CD8-positive, alpha-beta T cell (primary cell): ENCODE measurements at regions of chr16 and their contacts with region 1.

Region 1: GRCh38 chr16:4253394-4254150 is 11.7 kb upstream of the SRL start:
- DNase-seq: peak; percentile 98 to 100 (median 99)
- ATAC-seq: peak; percentile 96
- H3K4me3 ChIP-seq: peak overlapping the region; percentile 81 to 92
- H3K4me3 Mint-ChIP-seq: peak overlapping the region; percentile 93
- H3K27ac ChIP-seq: peak overlapping the region; percentile 88 to 89
- H3K27ac Mint-ChIP-seq: peak overlapping the region; percentile 98
- H3K4me1 ChIP-seq: peaks cover 6% of the 10 kb centered on the region
- H3K4me1 Mint-ChIP-seq: peaks cover 7% of the 10 kb centered on the region
- H3K27me3 ChIP-seq: no peaks in the 10 kb centered on the region
- H3K27me3 Mint-ChIP-seq: no peaks in the 10 kb centered on the region
- CTCF ChIP-seq: no peak

Region 2: GRCh38 chr16:3611146-3611975 is 642.2 kb before region 1 on chr16 and contains the start of gene SLX4:
- CTCF ChIA-PET with region 1: no interaction called
- POLR2A ChIA-PET with region 1: no interaction called
- intact Hi-C with region 1: loop called (anchors 5 kb)
- DNase-seq: peak; percentile 79 to 98 (median 91)
- ATAC-seq: peak; percentile 87
- H3K4me3 ChIP-seq: peak within 1 kb of the TSS; percentile 80 to 96
- H3K4me3 Mint-ChIP-seq: peak within 1 kb of the TSS; percentile 99
- H3K27ac ChIP-seq: peak within 1 kb of the TSS; percentile 78 to 89
- H3K27ac Mint-ChIP-seq: peak within 1 kb of the TSS; percentile 99
- H3K4me1 ChIP-seq: peaks cover 26% of the 10 kb centered on the region
- H3K4me1 Mint-ChIP-seq: peaks cover 49% of the 10 kb centered on the region
- H3K27me3 ChIP-seq: no peaks in the 10 kb centered on the region
- H3K27me3 Mint-ChIP-seq: no peaks in the 10 kb centered on the region
- CTCF ChIP-seq: no peak
- total RNA-seq, gene SLX4: 5.1 to 5.2 TPM

Region 3: GRCh38 chr16:3938848-3939624 is 314.5 kb before region 1 on chr16:
- CTCF ChIA-PET with region 1: interaction called, 6 read pairs
- POLR2A ChIA-PET with region 1: interaction called, 4 read pairs
- intact Hi-C with region 1: loop called in 1 of 2 experiments (anchors 2 kb)
- DNase-seq: peak; percentile 33 to 83 (median 67)
- ATAC-seq: peak; percentile 91
- H3K4me3 ChIP-seq: peak overlapping the region; percentile 17 to 33
- H3K4me3 Mint-ChIP-seq: no peak overlapping the region
- H3K27ac ChIP-seq: no peak overlapping the region
- H3K27ac Mint-ChIP-seq: no peak overlapping the region
- H3K4me1 ChIP-seq: peaks cover 13% of the 10 kb centered on the region
- H3K4me1 Mint-ChIP-seq: peaks cover 4% of the 10 kb centered on the region
- H3K27me3 ChIP-seq: peaks cover 0 to 5% of the 10 kb centered on the region in 2 experiments
- H3K27me3 Mint-ChIP-seq: peaks cover 3% of the 10 kb centered on the region
- CTCF ChIP-seq: peak; percentile 87

Region 4: GRCh38 chr16:4116337-4117249 is 137.0 kb before region 1 on chr16 and contains the start of gene ADCY9:
- CTCF ChIA-PET with region 1: interaction called, 4 read pairs
- POLR2A ChIA-PET with region 1: no interaction called
- intact Hi-C with region 1: loop called in 1 of 2 experiments (anchors 1 kb)
- DNase-seq: peak; percentile 31 to 92 (median 74)
- ATAC-seq: peak; percentile 77
- H3K4me3 ChIP-seq: peak within 1 kb of the TSS; percentile 55 to 64
- H3K4me3 Mint-ChIP-seq: peak within 1 kb of the TSS; percentile 87
- H3K27ac ChIP-seq: peak within 1 kb of the TSS in 1 of 2 experiments; percentile 39
- H3K27ac Mint-ChIP-seq: peak within 1 kb of the TSS; percentile 52
- H3K4me1 ChIP-seq: peaks cover 33% of the 10 kb centered on the region
- H3K4me1 Mint-ChIP-seq: peaks cover 40% of the 10 kb centered on the region
- H3K27me3 ChIP-seq: no peaks in the 10 kb centered on the region
- H3K27me3 Mint-ChIP-seq: peaks cover 3% of the 10 kb centered on the region
- CTCF ChIP-seq: no peak
- total RNA-seq, gene ADCY9: 4.2 to 4.3 TPM

Region 5: GRCh38 chr16:4307215-4308037 is 53.9 kb after region 1 on chr16:
- CTCF ChIA-PET with region 1: interaction called, 8 read pairs
- POLR2A ChIA-PET with region 1: interaction called, 6 read pairs
- intact Hi-C with region 1: loop called (anchors 1 kb)
- DNase-seq: peak; percentile 90 to 99 (median 96)
- ATAC-seq: peak; percentile 88
- H3K4me3 ChIP-seq: peak overlapping the region; percentile 57 to 71
- H3K4me3 Mint-ChIP-seq: peak overlapping the region; percentile 91
- H3K27ac ChIP-seq: peak overlapping the region; percentile 55 to 96
- H3K27ac Mint-ChIP-seq: peak overlapping the region; percentile 97
- H3K4me1 ChIP-seq: peaks cover 16% of the 10 kb centered on the region
- H3K4me1 Mint-ChIP-seq: peaks cover 26% of the 10 kb centered on the region
- H3K27me3 ChIP-seq: peaks cover 0 to 3% of the 10 kb centered on the region in 2 experiments
- H3K27me3 Mint-ChIP-seq: no peaks in the 10 kb centered on the region
- CTCF ChIP-seq: no peak

Region 6: DNA sequence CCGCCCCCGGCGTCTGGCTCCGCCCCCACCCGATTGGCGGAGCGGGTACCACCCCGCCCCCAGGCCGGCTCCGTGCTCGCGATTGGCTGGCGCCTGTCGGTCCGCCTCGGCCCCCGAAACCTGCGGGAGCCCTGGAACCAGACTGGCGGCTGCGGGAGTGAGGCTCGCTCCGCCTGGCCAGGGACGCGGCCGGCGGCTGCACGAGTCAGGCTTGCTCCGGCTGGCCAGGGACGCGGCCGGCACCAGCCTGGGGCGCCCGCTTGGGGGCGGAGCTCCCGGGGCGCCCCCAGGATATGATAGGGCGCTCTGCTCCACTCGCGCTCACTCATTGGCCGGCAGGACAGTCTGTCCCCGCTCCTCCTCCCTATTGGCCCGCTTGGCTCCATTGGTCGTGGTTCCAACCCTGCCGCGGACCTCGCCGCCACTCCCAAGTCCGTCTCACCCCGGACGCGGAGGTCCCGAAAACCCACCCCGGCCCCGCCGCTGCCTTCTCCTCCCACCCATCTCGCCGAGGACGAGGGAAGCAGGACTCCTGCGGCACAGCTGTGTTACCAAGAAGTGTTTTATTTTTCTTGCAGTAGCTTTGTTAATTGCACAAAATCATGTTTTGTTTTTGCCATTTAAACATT is 549.2 kb after region 1 on chr16:
- CTCF ChIA-PET with region 1: no interaction called
- POLR2A ChIA-PET with region 1: no interaction called
- intact Hi-C with region 1: loop called in 1 of 2 experiments (anchors 2 kb)
- DNase-seq: peak; percentile 79 to 95 (median 88)
- ATAC-seq: peak; percentile 86
- H3K4me3 ChIP-seq: peak overlapping the region; percentile 60 to 89
- H3K4me3 Mint-ChIP-seq: peak overlapping the region; percentile 87
- H3K27ac ChIP-seq: peak overlapping the region; percentile 25 to 77
- H3K27ac Mint-ChIP-seq: peak overlapping the region; percentile 74
- H3K4me1 ChIP-seq: peaks cover 14% of the 10 kb centered on the region
- H3K4me1 Mint-ChIP-seq: peaks cover 11% of the 10 kb centered on the region
- H3K27me3 ChIP-seq: no peaks in the 10 kb centered on the region
- H3K27me3 Mint-ChIP-seq: no peaks in the 10 kb centered on the region
- CTCF ChIP-seq: no peak